CD8-positive, alpha-beta T cell (primary cell): ENCODE measurements at regions of chr20 and their contacts with region 1.

Region 1: GRCh38 chr20:44069203-44070011 is 117.6 kb downstream of the JPH2 start:
- DNase-seq: peak; percentile 49 to 94 (median 76)
- ATAC-seq: peak; percentile 49
- H3K4me3 ChIP-seq: peak overlapping the region; percentile 50 to 54
- H3K4me3 Mint-ChIP-seq: peak overlapping the region; percentile 78
- H3K27ac ChIP-seq: peak overlapping the region; percentile 80 to 99
- H3K27ac Mint-ChIP-seq: peak overlapping the region; percentile 98
- H3K4me1 ChIP-seq: peaks cover 64% of the 10 kb centered on the region
- H3K4me1 Mint-ChIP-seq: peaks cover 78% of the 10 kb centered on the region
- H3K27me3 ChIP-seq: peaks cover 0 to 7% of the 10 kb centered on the region in 2 experiments
- H3K27me3 Mint-ChIP-seq: no peaks in the 10 kb centered on the region
- CTCF ChIP-seq: no peak

Region 2: DNA sequence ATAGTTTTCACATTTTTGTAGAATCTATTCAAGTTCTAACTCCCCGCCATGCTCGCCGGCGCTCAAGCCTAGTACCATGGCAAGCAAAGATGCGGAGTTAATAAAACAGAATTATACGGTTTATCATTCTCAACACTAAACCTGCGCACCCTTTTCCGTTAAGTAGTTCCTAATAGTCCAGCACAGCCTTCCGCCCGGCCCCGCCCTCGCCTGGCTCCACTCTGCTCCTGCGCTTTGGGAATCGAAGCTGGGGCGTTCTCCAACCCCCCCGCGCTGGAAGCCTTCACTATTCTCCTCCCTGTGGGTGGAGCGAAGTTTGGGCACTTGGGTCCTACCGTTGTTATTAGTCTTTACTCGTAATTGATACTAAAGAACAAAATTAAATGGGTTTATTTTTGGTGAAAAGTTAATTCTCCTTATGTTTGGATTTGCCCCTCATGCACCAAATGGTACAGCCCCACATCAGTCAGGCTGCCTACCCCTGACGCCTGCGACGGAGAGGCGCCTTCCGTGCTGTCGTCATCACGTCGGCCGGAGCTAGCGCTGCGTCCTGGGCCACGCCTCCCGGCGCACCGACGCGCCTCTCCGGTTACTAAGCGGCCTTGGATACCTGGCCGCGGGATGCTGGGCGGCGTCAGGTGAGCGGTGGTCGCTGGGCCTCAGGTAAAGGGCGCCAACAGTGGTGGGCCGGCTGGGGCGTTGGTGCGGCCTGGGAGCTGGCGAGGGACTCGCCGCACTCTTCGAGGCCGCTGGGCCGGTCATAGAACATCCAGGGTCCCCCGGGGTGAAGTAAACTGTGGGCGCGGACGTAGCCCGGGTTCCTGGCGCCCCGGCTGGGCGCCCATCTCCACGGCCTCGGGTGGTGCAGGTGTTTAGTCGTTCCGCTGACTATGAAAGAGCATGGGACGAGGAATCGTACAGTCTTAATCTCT is 478.7 kb before region 1 on chr20 and contains the start of gene IFT52:
- CTCF ChIA-PET with region 1: no interaction called
- POLR2A ChIA-PET with region 1: no interaction called
- intact Hi-C with region 1: loop called in 1 of 2 experiments (anchors 10 kb)
- DNase-seq: peak; percentile 79 to 96 (median 89)
- ATAC-seq: peak; percentile 98
- H3K4me3 ChIP-seq: peak within 1 kb of the TSS; percentile 62 to 88
- H3K4me3 Mint-ChIP-seq: peak within 1 kb of the TSS; percentile 91
- H3K27ac ChIP-seq: peak within 1 kb of the TSS; percentile 74 to 96
- H3K27ac Mint-ChIP-seq: peak within 1 kb of the TSS; percentile 96
- H3K4me1 ChIP-seq: peaks cover 13% of the 10 kb centered on the region
- H3K4me1 Mint-ChIP-seq: peaks cover 20% of the 10 kb centered on the region
- H3K27me3 ChIP-seq: no peaks in the 10 kb centered on the region
- H3K27me3 Mint-ChIP-seq: peaks cover 3% of the 10 kb centered on the region
- CTCF ChIP-seq: no peak
- total RNA-seq, gene IFT52: 11.5 to 14.1 TPM

Region 3: GRCh38 chr20:43942661-43943290 is 126.6 kb before region 1 on chr20:
- CTCF ChIA-PET with region 1: no interaction called
- POLR2A ChIA-PET with region 1: interaction called, 4 read pairs
- intact Hi-C with region 1: loop called in 1 of 2 experiments (anchors 5 kb)
- DNase-seq: peak in 3 of 9 experiments; percentile 51 to 64 (median 62)
- ATAC-seq: peak; percentile 76
- H3K4me3 ChIP-seq: no peak overlapping the region
- H3K4me3 Mint-ChIP-seq: peak overlapping the region; percentile 44
- H3K27ac ChIP-seq: no peak overlapping the region
- H3K27ac Mint-ChIP-seq: peak overlapping the region; percentile 60
- H3K4me1 ChIP-seq: peaks cover 42% of the 10 kb centered on the region
- H3K4me1 Mint-ChIP-seq: peaks cover 69% of the 10 kb centered on the region
- H3K27me3 ChIP-seq: peaks cover 0 to 3% of the 10 kb centered on the region in 2 experiments
- H3K27me3 Mint-ChIP-seq: peaks cover 10% of the 10 kb centered on the region
- CTCF ChIP-seq: no peak

Region 4: GRCh38 chr20:43963872-43964791 is 105.3 kb before region 1 on chr20:
- CTCF ChIA-PET with region 1: interaction called, 4 read pairs
- POLR2A ChIA-PET with region 1: no interaction called
- intact Hi-C with region 1: loop called (anchors 1 to 5 kb)
- DNase-seq: peak in 6 of 9 experiments; percentile 21 to 74 (median 61)
- ATAC-seq: peak; percentile 88
- H3K4me3 ChIP-seq: no peak overlapping the region
- H3K4me3 Mint-ChIP-seq: peak overlapping the region; percentile 56
- H3K27ac ChIP-seq: no peak overlapping the region
- H3K27ac Mint-ChIP-seq: peak overlapping the region; percentile 80
- H3K4me1 ChIP-seq: peaks cover 54% of the 10 kb centered on the region
- H3K4me1 Mint-ChIP-seq: peaks cover 41% of the 10 kb centered on the region
- H3K27me3 ChIP-seq: peaks cover 0 to 13% of the 10 kb centered on the region in 2 experiments
- H3K27me3 Mint-ChIP-seq: no peaks in the 10 kb centered on the region
- CTCF ChIP-seq: no peak

Region 5: GRCh38 chr20:44080646-44081267 is 11.3 kb after region 1 on chr20:
- CTCF ChIA-PET with region 1: interaction called, 52 read pairs
- POLR2A ChIA-PET with region 1: interaction called, 6 read pairs
- intact Hi-C with region 1: loop called (anchors 1 kb)
- DNase-seq: peak; percentile 61 to 88 (median 79)
- ATAC-seq: peak; percentile 99
- H3K4me3 ChIP-seq: no peak overlapping the region
- H3K4me3 Mint-ChIP-seq: no peak overlapping the region
- H3K27ac ChIP-seq: no peak overlapping the region
- H3K27ac Mint-ChIP-seq: peak overlapping the region; percentile 2
- H3K4me1 ChIP-seq: peaks cover 7% of the 10 kb centered on the region
- H3K4me1 Mint-ChIP-seq: peaks cover 21% of the 10 kb centered on the region
- H3K27me3 ChIP-seq: no peaks in the 10 kb centered on the region
- H3K27me3 Mint-ChIP-seq: no peaks in the 10 kb centered on the region
- CTCF ChIP-seq: peak; percentile 98

Region 6: DNA sequence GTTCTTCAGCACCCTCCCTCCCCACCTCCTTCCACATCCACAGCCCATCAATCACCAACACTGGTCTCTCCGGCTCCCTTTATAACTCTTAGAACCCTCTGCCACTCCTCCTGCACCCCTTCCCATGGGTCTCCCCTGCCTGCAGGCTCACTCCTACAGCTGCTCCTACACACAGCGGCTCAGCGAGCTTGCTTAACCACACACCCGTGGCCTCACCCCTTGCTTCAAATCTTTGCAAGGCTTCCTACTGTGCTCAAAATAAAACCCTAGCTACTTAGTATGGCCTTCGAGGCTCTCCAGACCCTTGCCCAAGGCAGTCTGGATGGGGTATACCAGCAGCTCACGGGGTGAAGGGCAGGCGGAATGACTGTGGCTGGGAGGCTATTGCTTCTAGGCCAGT is 53.8 kb after region 1 on chr20:
- CTCF ChIA-PET with region 1: no interaction called
- POLR2A ChIA-PET with region 1: no interaction called
- intact Hi-C with region 1: no loop called
- DNase-seq: no peak
- ATAC-seq: no peak
- H3K4me3 ChIP-seq: no peak overlapping the region
- H3K4me3 Mint-ChIP-seq: no peak overlapping the region
- H3K27ac ChIP-seq: no peak overlapping the region
- H3K27ac Mint-ChIP-seq: no peak overlapping the region
- H3K4me1 ChIP-seq: no peaks in the 10 kb centered on the region
- H3K4me1 Mint-ChIP-seq: no peaks in the 10 kb centered on the region
- H3K27me3 ChIP-seq: peaks cover 2 to 3% of the 10 kb centered on the region in 2 experiments
- H3K27me3 Mint-ChIP-seq: peaks cover 9% of the 10 kb centered on the region
- CTCF ChIP-seq: no peak

Region 7: GRCh38 chr20:44442298-44443070 is 373.1 kb after region 1 on chr20:
- CTCF ChIA-PET with region 1: no interaction called
- POLR2A ChIA-PET with region 1: no interaction called
- intact Hi-C with region 1: no loop called
- DNase-seq: no peak
- ATAC-seq: no peak
- H3K4me3 ChIP-seq: no peak overlapping the region
- H3K4me3 Mint-ChIP-seq: no peak overlapping the region
- H3K27ac ChIP-seq: no peak overlapping the region
- H3K27ac Mint-ChIP-seq: no peak overlapping the region
- H3K4me1 ChIP-seq: no peaks in the 10 kb centered on the region
- H3K4me1 Mint-ChIP-seq: no peaks in the 10 kb centered on the region
- H3K27me3 ChIP-seq: no peaks in the 10 kb centered on the region
- H3K27me3 Mint-ChIP-seq: peaks cover 16% of the 10 kb centered on the region
- CTCF ChIP-seq: no peak

Region 8: GRCh38 chr20:44521484-44522481 is 452.4 kb after region 1 on chr20 and contains the start of gene SERINC3:
- CTCF ChIA-PET with region 1: no interaction called
- POLR2A ChIA-PET with region 1: no interaction called
- intact Hi-C with region 1: loop called in 1 of 2 experiments (anchors 2 kb)
- DNase-seq: peak; percentile 96 to 99 (median 98)
- ATAC-seq: peak; percentile 93
- H3K4me3 ChIP-seq: peak within 1 kb of the TSS; percentile 88 to 100
- H3K4me3 Mint-ChIP-seq: peak within 1 kb of the TSS; percentile 86
- H3K27ac ChIP-seq: peak within 1 kb of the TSS; percentile 98 to 100
- H3K27ac Mint-ChIP-seq: peak within 1 kb of the TSS; percentile 96
- H3K4me1 ChIP-seq: peaks cover 52% of the 10 kb centered on the region
- H3K4me1 Mint-ChIP-seq: peaks cover 55% of the 10 kb centered on the region
- H3K27me3 ChIP-seq: no peaks in the 10 kb centered on the region
- H3K27me3 Mint-ChIP-seq: no peaks in the 10 kb centered on the region
- CTCF ChIP-seq: no peak
- total RNA-seq, gene SERINC3: 39.0 to 46.0 TPM